CD4-positive, alpha-beta T cell (primary cell): ENCODE measurements at regions of chr18 and their contacts with region 1.

Region 1: DNA sequence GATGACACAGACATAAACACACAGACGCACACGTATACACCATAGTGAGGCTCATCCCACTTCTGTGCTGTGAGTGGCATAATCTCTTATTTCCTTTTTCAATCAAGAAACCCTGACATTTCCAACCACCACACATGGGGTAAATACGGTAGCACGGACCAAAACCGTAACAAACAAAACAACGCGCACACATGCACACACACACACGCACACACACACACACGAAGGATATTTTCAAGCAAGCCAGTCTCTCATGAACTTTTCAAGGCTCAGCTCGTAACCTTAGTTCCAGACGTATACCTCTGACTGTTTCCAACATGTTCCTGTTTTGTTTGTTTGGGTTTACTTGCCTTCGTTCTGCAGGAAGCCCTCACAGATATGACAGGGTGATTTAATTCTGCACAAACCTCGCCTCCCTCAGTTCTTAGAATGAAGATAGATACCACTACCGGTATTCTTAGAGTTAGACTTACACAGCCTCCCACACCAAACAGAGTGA is 119.8 kb downstream of the BCL2 start:
- DNase-seq: peak in 11 of 14 experiments; percentile 10 to 87 (median 39)
- ATAC-seq: peak; percentile 70
- H3K4me3 ChIP-seq: peak overlapping the region; percentile 68
- H3K4me3 Mint-ChIP-seq: no peak overlapping the region
- H3K27ac ChIP-seq: peak overlapping the region; percentile 66 to 67
- H3K27ac Mint-ChIP-seq: no peak overlapping the region
- H3K4me1 ChIP-seq: peaks cover 59% of the 10 kb centered on the region
- H3K4me1 Mint-ChIP-seq: peaks cover 37% of the 10 kb centered on the region
- H3K27me3 ChIP-seq: no peaks in the 10 kb centered on the region
- H3K27me3 Mint-ChIP-seq: no peaks in the 10 kb centered on the region
- CTCF ChIP-seq: no peak

Region 2: GRCh38 chr18:63155169-63155852 is 44.5 kb before region 1 on chr18:
- CTCF ChIA-PET with region 1: interaction called, 9 read pairs
- POLR2A ChIA-PET with region 1: interaction called, 16 read pairs
- intact Hi-C with region 1: loop called in 1 of 2 experiments (anchors 5 kb)
- DNase-seq: peak; percentile 63 to 90 (median 76)
- ATAC-seq: peak; percentile 75
- H3K4me3 ChIP-seq: peak overlapping the region; percentile 51
- H3K4me3 Mint-ChIP-seq: peak overlapping the region; percentile 85
- H3K27ac ChIP-seq: peak overlapping the region; percentile 95 to 96
- H3K27ac Mint-ChIP-seq: peak overlapping the region; percentile 91
- H3K4me1 ChIP-seq: peaks cover 97% of the 10 kb centered on the region
- H3K4me1 Mint-ChIP-seq: peaks cover 100% of the 10 kb centered on the region
- H3K27me3 ChIP-seq: no peaks in the 10 kb centered on the region
- H3K27me3 Mint-ChIP-seq: no peaks in the 10 kb centered on the region
- CTCF ChIP-seq: peak; percentile 94

Region 3: DNA sequence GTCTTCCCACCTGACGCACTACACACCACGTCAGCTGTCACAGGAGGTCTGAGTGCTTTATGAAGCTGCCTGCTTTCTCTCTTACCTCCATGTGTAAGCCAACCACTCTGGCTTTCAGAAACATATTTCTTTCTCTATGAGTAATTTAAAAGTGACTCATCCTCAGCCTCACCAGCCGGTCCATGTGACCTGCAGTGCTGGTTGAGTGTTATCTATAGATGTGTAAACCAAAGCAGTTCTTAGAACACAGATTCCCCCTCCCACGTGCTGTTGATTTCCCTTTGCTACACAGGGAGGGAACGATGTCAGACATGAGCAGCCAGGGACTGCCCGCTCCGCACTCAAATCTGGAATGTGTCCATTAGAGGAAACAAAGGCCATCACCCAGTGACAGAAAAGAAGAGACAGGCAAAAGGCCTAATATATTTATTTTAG is 38.0 kb before region 1 on chr18:
- CTCF ChIA-PET with region 1: no interaction called
- POLR2A ChIA-PET with region 1: interaction called, 16 read pairs
- intact Hi-C with region 1: loop called (anchors 1 to 5 kb)
- DNase-seq: peak; percentile 66 to 94 (median 74)
- ATAC-seq: peak; percentile 84
- H3K4me3 ChIP-seq: peak overlapping the region; percentile 38
- H3K4me3 Mint-ChIP-seq: peak overlapping the region; percentile 65
- H3K27ac ChIP-seq: peak overlapping the region; percentile 95 to 96
- H3K27ac Mint-ChIP-seq: peak overlapping the region; percentile 91
- H3K4me1 ChIP-seq: peaks cover 81% of the 10 kb centered on the region
- H3K4me1 Mint-ChIP-seq: peaks cover 78% of the 10 kb centered on the region
- H3K27me3 ChIP-seq: no peaks in the 10 kb centered on the region
- H3K27me3 Mint-ChIP-seq: no peaks in the 10 kb centered on the region
- CTCF ChIP-seq: no peak

Region 4: DNA sequence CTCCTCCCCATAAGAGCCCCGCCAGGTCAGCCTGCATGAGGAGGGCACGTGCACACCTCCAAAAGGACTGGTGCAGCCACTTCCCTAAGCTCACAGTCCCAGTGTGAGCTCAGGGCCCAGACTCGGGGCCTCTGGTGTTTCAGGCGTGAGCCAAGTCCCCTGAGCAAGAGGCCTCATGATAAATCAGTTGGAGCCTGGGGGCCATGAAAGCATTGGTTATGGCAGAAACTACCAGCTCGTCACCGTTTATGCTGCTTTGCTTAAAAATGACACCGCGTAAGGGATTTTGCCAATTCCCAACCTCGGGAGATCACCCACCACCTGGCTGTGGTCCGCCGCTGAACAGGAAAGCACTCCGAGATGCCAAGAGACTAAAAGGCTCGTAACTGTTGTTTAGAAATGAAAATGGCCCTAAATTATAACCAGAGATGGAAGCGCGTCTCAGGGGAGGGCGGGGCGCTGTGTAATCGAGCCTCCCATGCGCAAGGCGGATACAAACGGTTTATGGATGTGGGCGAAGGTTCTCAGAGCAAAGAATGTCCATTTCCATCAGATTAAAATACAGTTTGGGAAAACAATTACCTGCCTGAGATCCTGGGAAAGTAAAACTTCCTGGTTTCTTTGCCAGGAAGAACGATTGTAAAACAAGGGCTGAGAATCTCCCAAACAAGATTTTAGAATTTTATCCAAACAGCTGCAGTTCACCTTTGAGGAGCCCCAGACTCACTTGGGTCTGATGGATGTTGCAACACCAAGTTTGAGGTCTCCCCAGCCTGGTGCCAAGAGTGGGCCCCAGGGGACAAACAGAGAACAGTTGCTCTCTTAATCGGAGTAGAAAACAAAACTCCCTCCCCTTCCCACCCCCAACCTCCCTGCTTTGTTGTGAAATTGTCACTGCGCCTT is 21.6 kb before region 1 on chr18:
- CTCF ChIA-PET with region 1: interaction called, 5 read pairs
- POLR2A ChIA-PET with region 1: interaction called, 4 read pairs
- intact Hi-C with region 1: loop called in 1 of 2 experiments (anchors 2 kb)
- DNase-seq: no peak
- ATAC-seq: no peak
- H3K4me3 ChIP-seq: no peak overlapping the region
- H3K4me3 Mint-ChIP-seq: no peak overlapping the region
- H3K27ac ChIP-seq: no peak overlapping the region
- H3K27ac Mint-ChIP-seq: no peak overlapping the region
- H3K4me1 ChIP-seq: peaks cover 26% of the 10 kb centered on the region
- H3K4me1 Mint-ChIP-seq: peaks cover 51% of the 10 kb centered on the region
- H3K27me3 ChIP-seq: no peaks in the 10 kb centered on the region
- H3K27me3 Mint-ChIP-seq: no peaks in the 10 kb centered on the region
- CTCF ChIP-seq: no peak

Region 5: DNA sequence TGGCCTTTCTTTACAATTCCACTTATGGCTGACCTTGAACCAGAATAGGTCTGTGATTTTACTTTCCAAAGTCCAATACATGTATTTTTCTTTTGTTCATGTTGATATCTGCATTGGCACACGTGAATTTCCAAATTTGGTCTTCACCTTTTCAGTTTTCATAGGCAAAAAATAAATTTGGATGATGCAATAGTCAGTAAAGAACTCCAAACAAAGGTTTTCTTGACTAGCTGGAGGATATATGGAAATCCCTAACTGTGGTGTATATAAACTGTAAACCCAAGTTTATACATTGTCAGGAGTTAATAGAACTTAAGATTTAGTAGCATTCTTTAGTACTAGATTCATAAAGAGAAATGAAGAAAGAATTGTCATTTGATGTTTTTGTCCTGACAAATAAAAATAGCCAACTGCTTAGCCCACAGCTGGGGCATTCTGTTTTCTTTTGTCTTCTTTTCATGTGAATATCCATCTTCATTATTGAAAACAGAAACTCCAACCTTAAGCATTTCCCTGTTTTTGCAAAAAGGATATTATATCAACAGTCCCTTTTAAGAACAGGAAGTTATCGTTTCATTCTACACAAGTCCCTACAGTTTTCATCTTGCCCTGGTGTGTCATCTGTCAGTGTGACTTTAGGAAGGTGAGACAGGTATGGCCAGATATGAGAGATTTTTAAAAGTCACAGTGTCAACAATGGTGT is 13.1 kb before region 1 on chr18:
- CTCF ChIA-PET with region 1: interaction called, 10 read pairs
- POLR2A ChIA-PET with region 1: interaction called, 6 read pairs
- intact Hi-C with region 1: no loop called
- DNase-seq: peak in 1 of 14 experiments; percentile 15
- ATAC-seq: no peak
- H3K4me3 ChIP-seq: no peak overlapping the region
- H3K4me3 Mint-ChIP-seq: no peak overlapping the region
- H3K27ac ChIP-seq: no peak overlapping the region
- H3K27ac Mint-ChIP-seq: peak overlapping the region; percentile 62
- H3K4me1 ChIP-seq: peaks cover 39% of the 10 kb centered on the region
- H3K4me1 Mint-ChIP-seq: peaks cover 72% of the 10 kb centered on the region
- H3K27me3 ChIP-seq: no peaks in the 10 kb centered on the region
- H3K27me3 Mint-ChIP-seq: no peaks in the 10 kb centered on the region
- CTCF ChIP-seq: no peak

Region 6: GRCh38 chr18:63216516-63217311 is 16.9 kb after region 1 on chr18:
- CTCF ChIA-PET with region 1: interaction called, 3 read pairs
- POLR2A ChIA-PET with region 1: interaction called, 8 read pairs
- intact Hi-C with region 1: loop called in 1 of 2 experiments (anchors 2 kb)
- DNase-seq: peak in 7 of 14 experiments; percentile 16 to 69 (median 46)
- ATAC-seq: peak; percentile 71
- H3K4me3 ChIP-seq: peak overlapping the region; percentile 24
- H3K4me3 Mint-ChIP-seq: peak overlapping the region; percentile 86
- H3K27ac ChIP-seq: peak overlapping the region; percentile 16 to 73
- H3K27ac Mint-ChIP-seq: peak overlapping the region; percentile 99
- H3K4me1 ChIP-seq: peaks cover 60% of the 10 kb centered on the region
- H3K4me1 Mint-ChIP-seq: peaks cover 89% of the 10 kb centered on the region
- H3K27me3 ChIP-seq: no peaks in the 10 kb centered on the region
- H3K27me3 Mint-ChIP-seq: no peaks in the 10 kb centered on the region
- CTCF ChIP-seq: no peak

Region 7: DNA sequence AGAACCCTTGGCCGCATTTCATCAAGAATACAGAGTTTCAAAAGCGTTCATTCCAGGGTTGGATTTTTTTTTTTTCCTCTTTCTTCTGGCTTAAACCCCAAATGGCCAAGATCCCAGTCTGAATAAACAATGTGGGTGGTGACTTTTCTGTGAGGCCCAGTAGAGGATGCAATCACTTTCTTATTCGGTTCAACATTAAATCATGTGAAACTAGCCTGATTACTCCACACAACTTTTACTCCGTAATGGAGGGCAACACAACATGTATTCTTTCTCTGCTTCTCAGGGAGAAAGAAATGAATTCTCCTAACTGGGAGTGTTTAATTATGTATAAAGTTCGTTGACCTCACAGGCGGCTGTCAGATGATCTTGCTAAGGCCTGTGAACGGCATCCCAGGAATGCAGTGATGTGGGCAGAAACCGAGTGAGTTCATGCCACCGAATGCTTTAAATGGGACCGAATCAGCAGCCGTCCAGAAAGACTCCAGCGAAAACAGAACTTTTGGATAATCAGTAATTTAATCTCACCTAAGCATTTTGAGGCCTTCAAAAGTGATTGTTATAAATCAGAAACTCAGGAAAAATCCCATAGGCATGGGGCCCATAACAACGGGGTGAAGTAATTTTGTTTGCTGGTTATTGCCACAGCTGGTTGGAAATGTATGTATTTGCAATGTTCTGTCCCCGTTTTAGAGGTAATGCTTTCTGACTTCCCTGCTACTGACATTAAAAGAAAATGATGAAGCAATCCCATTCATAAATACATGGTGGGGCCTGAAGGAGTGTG is 38.3 kb after region 1 on chr18:
- CTCF ChIA-PET with region 1: no interaction called
- POLR2A ChIA-PET with region 1: no interaction called
- intact Hi-C with region 1: loop called in 1 of 2 experiments (anchors 5 kb)
- DNase-seq: no peak
- ATAC-seq: no peak
- H3K4me3 ChIP-seq: no peak overlapping the region
- H3K4me3 Mint-ChIP-seq: no peak overlapping the region
- H3K27ac ChIP-seq: peak overlapping the region in 1 of 2 donors; percentile 1
- H3K27ac Mint-ChIP-seq: no peak overlapping the region
- H3K4me1 ChIP-seq: peaks cover 22% of the 10 kb centered on the region
- H3K4me1 Mint-ChIP-seq: peaks cover 48% of the 10 kb centered on the region
- H3K27me3 ChIP-seq: no peaks in the 10 kb centered on the region
- H3K27me3 Mint-ChIP-seq: no peaks in the 10 kb centered on the region
- CTCF ChIP-seq: no peak